GM10248 (cell line): ENCODE measurements at regions of chr19 and their contacts with region 1.

Region 1: DNA sequence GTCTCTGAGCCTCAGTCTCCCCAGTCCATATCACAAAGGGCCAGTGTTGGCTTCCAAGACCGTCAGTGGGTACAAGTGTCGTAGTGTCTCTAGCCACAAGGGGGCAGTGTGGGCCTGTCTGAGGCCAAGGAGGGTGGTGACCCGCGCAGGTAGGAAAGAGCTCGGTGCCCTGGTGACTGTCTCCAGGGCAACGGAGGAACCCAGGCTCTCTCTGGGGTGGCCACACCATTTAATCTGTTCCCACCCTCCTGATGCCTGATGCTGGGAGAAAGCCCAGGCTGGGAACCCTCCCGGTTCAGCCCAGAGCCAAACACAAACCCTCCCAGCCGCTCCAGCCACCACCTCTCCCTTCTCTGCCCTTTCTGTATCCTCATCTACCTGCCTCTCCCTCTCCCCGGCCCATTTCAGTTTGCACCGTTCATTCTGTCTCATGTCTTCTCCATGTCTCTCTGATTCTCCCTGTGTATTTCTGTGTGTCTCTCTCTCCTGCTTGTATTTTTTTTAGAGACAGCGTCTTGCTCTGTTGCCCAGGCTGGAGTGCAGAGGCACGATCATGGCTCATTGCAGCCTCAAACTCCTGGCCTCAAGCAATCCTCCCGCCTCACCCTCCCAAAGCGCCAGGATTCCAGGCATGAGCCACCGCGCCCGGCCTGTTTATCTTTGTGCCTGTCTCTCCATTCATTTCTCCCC is 17.5 kb upstream of the MEIS3 start:
- DNase-seq: peak; percentile 87
- CTCF ChIP-seq: peak; percentile 87

Region 2: DNA sequence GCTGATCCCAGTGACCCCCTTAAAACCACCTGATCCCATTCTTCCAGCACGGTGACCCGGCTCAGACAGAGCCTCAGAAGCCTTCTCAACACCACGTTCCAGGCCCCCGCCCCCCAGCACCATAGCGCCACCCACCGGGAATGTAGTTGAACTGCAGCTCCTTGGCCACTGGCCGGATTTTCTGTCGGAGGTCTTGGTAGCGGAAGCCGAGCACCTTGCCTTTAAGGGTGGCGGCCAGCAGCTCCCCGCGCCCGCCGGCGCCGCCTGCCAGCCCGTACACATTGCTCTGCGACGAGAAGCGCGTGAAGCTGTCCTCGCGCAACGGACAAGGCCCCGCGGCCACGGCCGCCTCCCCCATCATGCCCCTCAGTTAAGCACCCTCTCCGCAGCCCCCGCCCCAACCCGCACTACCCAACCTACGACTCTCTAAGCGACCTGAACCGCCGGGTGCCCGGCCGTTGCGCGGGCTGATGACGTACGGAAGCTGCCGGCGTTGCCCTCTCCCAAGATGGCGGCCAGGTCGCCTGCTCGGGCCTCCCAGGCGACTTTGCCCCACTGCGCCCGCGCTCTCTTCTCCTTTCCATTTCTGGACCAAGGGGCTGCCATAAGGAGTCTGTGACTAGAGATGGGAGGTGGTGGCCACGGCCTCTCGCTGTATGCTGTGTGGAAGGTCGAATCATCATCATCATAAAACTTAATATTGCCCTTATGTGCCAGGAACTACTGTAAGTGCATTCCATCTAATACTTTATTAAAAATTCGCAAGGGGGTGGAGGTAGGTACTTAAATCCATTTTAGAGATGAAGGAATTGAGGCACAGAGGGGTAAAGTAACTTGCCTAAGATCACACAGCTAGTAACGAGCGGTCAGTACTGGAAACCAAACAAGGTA is 47.2 kb after region 1 on chr19 and contains the start of gene KPTN:
- CTCF ChIA-PET with region 1: interaction called, 24 read pairs
- POLR2A ChIA-PET with region 1: no interaction called
- DNase-seq: peak; percentile 96
- CTCF ChIP-seq: peak; percentile 97

Region 3: GRCh38 chr19:47499863-47500830 is 63.3 kb after region 1 on chr19:
- CTCF ChIA-PET with region 1: no interaction called
- POLR2A ChIA-PET with region 1: no interaction called
- DNase-seq: no peak
- CTCF ChIP-seq: no peak

Region 4: DNA sequence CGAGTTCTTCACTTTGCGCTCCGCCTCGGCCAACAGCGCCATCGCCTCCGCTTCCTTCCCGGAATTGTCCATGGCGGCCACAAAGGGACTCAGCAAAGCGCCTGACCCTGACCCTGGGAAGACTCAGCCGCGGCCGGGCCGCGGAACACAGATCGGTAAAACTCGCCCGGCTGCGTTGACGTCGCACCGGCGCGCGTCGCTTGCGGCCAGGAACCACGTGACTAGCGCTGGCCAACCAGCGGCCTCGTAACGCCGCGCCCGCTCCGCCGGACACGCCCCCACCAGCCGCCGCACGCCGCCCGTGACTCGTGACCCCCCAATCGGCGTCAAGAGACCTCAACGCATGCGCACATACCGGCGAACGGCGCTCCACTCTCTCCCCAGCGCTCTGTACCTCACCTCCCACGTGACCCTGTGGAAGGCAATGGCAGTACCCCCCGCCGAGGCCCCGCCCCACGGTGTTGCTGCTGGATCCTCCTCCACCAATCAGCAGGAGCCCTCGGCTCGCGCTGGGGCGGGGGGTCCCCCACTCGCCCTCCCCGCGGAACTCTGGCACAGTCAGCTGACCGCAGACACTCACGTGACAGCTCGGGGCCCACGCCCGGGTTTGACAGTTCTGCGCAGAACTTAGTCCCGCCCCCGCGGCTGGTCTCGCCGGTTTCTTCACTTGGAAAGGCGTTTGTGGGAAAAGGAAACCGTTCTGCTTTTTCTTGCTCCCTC is 78.2 kb after region 1 on chr19 and contains the start of gene NAPA:
- CTCF ChIA-PET with region 1: interaction called, 20 read pairs
- POLR2A ChIA-PET with region 1: no interaction called
- DNase-seq: peak; percentile 99
- CTCF ChIP-seq: no peak

Region 5: DNA sequence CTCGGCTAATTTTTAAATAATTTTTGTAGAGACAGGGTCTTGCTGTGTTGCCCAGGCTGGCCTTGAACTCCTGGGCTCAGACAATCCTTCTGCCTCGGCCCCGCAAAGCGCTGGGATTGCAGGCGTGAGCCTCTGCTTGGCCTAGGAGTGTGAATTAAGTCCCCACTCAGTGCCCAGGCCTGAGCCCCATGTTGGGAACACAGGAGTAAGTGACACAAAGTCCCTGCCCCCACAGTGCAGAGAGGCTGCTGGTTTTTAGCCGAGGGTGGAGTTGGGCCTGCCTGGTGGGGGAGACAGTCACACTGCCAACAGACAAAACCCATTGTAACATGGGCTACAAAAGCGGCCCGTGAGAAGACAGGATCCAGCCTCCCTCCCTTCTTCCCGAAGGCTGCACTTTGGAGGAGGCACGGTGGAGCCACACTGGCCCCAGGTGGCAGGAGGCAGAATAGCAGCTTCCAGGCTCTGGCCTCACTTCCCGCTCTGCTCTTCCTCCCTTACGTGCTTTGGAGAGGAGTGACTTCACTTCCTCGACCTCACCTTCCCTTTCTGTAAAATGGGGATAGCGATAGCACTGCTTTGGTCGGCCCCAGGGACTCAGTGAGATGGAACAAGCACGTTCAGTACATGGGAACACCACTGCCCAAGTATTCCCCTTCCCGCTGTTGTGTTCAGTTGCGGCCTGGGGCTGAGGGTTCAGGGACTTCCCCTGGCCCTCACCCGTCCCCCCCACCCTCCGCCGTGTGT is 261.2 kb after region 1 on chr19:
- CTCF ChIA-PET with region 1: interaction called, 288 read pairs
- POLR2A ChIA-PET with region 1: no interaction called
- DNase-seq: peak; percentile 85
- CTCF ChIP-seq: peak; percentile 95

Region 6: GRCh38 chr19:47745010-47745901 is 308.4 kb after region 1 on chr19 and contains the start of gene NOP53:
- CTCF ChIA-PET with region 1: interaction called, 11 read pairs
- POLR2A ChIA-PET with region 1: no interaction called
- DNase-seq: peak; percentile 96
- CTCF ChIP-seq: no peak